PC-9 (cell line): ENCODE measurements at regions of chr5 and their contacts with region 1.

Region 1: GRCh38 chr5:44900273-44900954 is 91.7 kb downstream of the MRPS30 start:
- DNase-seq: no peak
- H3K4me3 ChIP-seq: no peak overlapping the region
- H3K27ac ChIP-seq: no peak overlapping the region
- H3K4me1 ChIP-seq: no peaks in the 10 kb centered on the region
- H3K27me3 ChIP-seq: no peaks in the 10 kb centered on the region
- CTCF ChIP-seq: no peak

Region 2: GRCh38 chr5:44885903-44886302 is 14.5 kb before region 1 on chr5:
- CTCF ChIA-PET with region 1: no interaction called
- POLR2A ChIA-PET with region 1: interaction called, 14 read pairs
- intact Hi-C with region 1: no loop called
- DNase-seq: peak in 1 of 2 experiments; percentile 41
- H3K4me3 ChIP-seq: no peak overlapping the region
- H3K27ac ChIP-seq: peak overlapping the region; percentile 57
- H3K4me1 ChIP-seq: peaks cover 8% of the 10 kb centered on the region; the same call in 1 of the 2 replicates
- H3K27me3 ChIP-seq: no peaks in the 10 kb centered on the region
- CTCF ChIP-seq: no peak